Caco-2 (cell line): ENCODE measurements at regions of chr4 and their contacts with region 1.

Region 1: GRCh38 chr4:71732706-71733105 is 51.2 kb downstream of the GC start:
- DNase-seq: peak in 1 of 2 experiments; percentile 4
- H3K4me3 ChIP-seq: no peak overlapping the region
- H3K4me3 Mint-ChIP-seq: no peak overlapping the region
- H3K27ac Mint-ChIP-seq: no peak overlapping the region
- H3K4me1 ChIP-seq: no peaks in the 10 kb centered on the region
- H3K4me1 Mint-ChIP-seq: no peaks in the 10 kb centered on the region
- H3K27me3 ChIP-seq: no peaks in the 10 kb centered on the region
- H3K27me3 Mint-ChIP-seq: no peaks in the 10 kb centered on the region
- CTCF ChIP-seq: peak in 1 of 2 experiments; percentile 34

Region 2: DNA sequence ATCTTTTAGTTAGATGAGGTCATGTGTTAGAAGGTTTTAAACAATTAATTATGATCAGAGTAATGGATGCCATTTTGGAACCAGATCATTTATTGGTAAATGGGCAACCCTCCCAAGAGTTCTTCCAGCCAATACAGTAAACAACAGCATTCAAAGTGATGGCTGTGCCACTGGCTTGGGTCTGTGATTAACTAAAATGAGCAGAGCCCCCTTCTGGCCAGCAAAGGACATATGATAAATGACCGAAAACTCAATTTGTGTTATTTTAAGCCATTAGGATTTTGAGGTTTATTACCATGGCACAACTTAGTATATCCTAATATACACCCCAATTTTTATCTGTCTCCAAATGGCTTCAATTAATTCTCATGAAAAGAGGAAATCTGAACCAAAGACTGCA is 208.3 kb after region 1 on chr4:
- CTCF ChIA-PET with region 1: no interaction called
- POLR2A ChIA-PET with region 1: no interaction called
- intact Hi-C with region 1: loop called (anchors 1 kb)
- DNase-seq: peak in 1 of 2 experiments; percentile 35
- H3K4me3 ChIP-seq: no peak overlapping the region
- H3K4me3 Mint-ChIP-seq: no peak overlapping the region
- H3K27ac Mint-ChIP-seq: no peak overlapping the region
- H3K4me1 ChIP-seq: no peaks in the 10 kb centered on the region
- H3K4me1 Mint-ChIP-seq: no peaks in the 10 kb centered on the region
- H3K27me3 ChIP-seq: no peaks in the 10 kb centered on the region
- H3K27me3 Mint-ChIP-seq: no peaks in the 10 kb centered on the region
- CTCF ChIP-seq: peak; percentile 25 to 32

Region 3: DNA sequence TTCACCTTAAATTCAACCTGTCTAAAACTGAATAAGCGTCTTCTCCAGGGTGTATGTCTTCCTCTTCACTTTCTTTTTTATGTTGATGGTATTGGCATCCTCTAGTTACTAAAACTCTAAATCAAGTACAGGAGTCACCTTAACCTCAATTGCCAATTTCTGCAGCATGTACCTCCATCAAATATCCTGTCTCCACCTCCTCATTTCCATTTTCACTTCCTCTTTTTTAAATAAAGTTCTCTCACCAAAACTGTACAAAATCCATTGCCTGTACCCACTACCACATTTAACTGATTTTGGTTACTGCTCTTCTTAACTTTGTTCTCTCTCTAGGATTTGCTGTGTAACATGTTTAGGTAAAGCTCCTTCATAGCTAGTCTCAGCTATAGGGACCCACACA is 289.8 kb after region 1 on chr4:
- CTCF ChIA-PET with region 1: no interaction called
- POLR2A ChIA-PET with region 1: no interaction called
- intact Hi-C with region 1: no loop called
- DNase-seq: no peak
- H3K4me3 ChIP-seq: no peak overlapping the region
- H3K4me3 Mint-ChIP-seq: no peak overlapping the region
- H3K27ac Mint-ChIP-seq: no peak overlapping the region
- H3K4me1 ChIP-seq: no peaks in the 10 kb centered on the region
- H3K4me1 Mint-ChIP-seq: no peaks in the 10 kb centered on the region
- H3K27me3 ChIP-seq: no peaks in the 10 kb centered on the region
- H3K27me3 Mint-ChIP-seq: no peaks in the 10 kb centered on the region
- CTCF ChIP-seq: no peak

Region 4: DNA sequence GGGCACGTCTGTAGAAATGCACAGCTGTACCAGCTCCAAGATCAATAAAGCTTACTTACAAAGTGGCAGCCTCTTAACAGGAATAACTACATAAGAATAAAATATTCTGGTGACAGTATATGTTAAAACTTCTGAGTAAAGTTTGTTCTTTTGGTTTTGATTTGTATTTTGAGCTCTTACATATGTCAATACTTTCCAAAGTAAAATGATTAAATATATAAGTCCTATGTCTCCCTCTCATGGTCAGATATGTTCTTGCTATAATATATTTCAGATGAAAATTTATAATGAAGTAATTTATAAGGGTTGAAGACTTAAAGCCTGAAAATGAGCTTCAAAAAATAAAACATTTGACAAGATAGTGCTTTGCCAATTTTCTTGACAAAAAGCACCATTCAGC is 553.5 kb after region 1 on chr4:
- CTCF ChIA-PET with region 1: no interaction called
- POLR2A ChIA-PET with region 1: no interaction called
- intact Hi-C with region 1: loop called (anchors 1 kb)
- DNase-seq: no peak
- H3K4me3 ChIP-seq: no peak overlapping the region
- H3K4me3 Mint-ChIP-seq: no peak overlapping the region
- H3K27ac Mint-ChIP-seq: no peak overlapping the region
- H3K4me1 ChIP-seq: no peaks in the 10 kb centered on the region
- H3K4me1 Mint-ChIP-seq: no peaks in the 10 kb centered on the region
- H3K27me3 ChIP-seq: no peaks in the 10 kb centered on the region
- H3K27me3 Mint-ChIP-seq: peaks cover 5% of the 10 kb centered on the region
- CTCF ChIP-seq: no peak